Common myeloid progenitor, CD34-positive (primary cell): ENCODE measurements at regions of chr22 and their contacts with region 1.

Region 1: DNA sequence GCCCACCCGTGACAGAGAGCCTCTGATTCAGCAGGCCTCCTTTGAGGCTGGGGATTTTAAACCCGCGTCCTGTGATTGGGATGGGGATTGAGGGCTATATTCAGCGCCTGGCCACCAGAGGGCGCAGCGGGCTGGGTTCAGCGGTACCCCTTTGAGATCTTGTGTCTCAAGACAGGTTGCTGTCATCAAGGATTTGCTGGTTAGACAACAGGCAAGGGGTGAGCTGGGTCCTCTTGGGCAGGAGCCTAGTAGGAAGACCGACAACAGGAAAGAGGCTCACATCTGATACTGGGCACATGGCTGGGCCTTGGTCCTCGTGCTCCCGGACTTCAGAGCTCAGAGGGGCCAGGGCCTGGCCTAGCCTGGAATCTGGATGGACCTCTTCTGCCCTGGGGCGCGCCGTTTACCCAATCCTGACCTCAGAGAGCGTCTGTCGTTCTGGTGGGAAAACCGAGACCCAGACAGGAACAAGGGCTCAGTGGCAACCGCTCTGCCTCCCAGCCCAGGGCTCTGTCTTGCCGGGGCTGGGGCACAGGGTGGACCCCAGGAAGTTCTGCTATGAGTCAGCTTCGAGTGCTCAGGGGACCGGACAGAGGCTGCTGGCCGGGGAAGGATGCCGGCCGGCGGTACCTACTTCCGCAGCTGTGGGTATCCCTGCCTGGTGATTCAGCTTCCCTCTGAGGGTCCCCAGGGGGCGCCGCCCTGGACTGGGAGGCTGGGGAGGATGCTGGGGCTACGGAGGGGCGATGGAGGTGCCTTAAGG is 929 bp upstream of the SLC35E4 start:
- DNase-seq: peak; percentile 84 to 89 (median 89)
- H3K4me3 ChIP-seq: peak overlapping the region in 5 of 7 experiments; percentile 30 to 78 (median 73)
- H3K27ac ChIP-seq: no peak overlapping the region
- H3K4me1 ChIP-seq: peaks cover 0 to 24% (median 23%) of the 10 kb centered on the region in 4 experiments
- H3K27me3 ChIP-seq: no peaks in the 10 kb centered on the region

Region 2: DNA sequence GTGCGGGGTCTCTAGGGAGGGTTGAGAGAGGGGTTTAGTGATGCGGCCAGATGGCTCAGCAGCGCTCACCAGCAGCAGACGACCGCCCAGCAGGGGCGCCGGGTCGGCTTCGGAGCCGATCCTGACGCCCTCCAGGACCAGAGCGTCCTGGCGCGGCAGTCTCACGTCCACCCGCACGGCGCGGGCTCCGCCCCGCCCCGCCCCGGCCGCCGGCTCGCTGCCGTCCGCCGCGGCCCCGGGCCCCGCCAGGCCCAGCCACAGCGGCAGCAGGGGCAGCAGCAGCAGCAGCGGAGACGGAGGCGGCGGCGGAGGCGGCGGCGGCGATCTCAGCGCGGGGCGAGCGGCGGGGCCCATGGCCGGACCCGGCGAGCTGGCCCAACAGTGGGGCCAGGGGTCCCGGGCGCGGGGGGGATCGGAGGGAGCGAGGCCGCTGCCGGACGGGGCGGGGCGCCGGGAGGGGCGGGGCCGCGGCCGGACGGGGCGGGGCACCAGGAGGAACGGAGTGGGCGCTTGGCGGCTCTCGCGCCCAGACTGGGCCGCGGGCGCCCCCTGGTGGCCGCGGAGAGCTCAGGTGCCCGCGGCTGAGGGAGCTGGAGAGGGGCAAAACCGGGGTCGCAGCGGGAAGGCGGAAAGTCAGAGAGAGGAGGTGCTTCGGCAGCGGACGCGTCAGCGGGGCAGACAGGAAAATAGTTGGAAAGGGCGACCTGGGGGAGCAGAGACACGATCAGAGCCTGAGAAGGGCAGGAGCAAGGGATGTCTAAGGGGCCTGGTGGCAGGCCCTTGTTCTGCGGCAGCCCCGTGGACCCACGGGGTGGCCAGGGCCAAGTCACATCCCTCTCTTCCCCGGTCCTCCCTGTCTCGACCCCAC is 247.5 kb before region 1 on chr22 and contains the start of gene RNF215:
- CTCF ChIA-PET with region 1: no interaction called
- POLR2A ChIA-PET with region 1: no interaction called
- DNase-seq: peak; percentile 74 to 79 (median 78)
- H3K4me3 ChIP-seq: peak within 1 kb of the TSS; percentile 25 to 75 (median 57)
- H3K27ac ChIP-seq: peak within 1 kb of the TSS in 1 of 2 experiments; percentile 34
- H3K4me1 ChIP-seq: peaks cover 2 to 12% (median 11%) of the 10 kb centered on the region in 4 experiments
- H3K27me3 ChIP-seq: no peaks in the 10 kb centered on the region

Region 3: GRCh38 chr22:30649430-30650007 is 14.9 kb after region 1 on chr22:
- CTCF ChIA-PET with region 1: interaction called, 12 read pairs
- POLR2A ChIA-PET with region 1: no interaction called
- DNase-seq: peak; percentile 85 to 94 (median 92)
- H3K4me3 ChIP-seq: no peak overlapping the region
- H3K27ac ChIP-seq: no peak overlapping the region
- H3K4me1 ChIP-seq: peaks cover 0 to 8% (median 3%) of the 10 kb centered on the region in 4 experiments
- H3K27me3 ChIP-seq: no peaks in the 10 kb centered on the region

Region 4: GRCh38 chr22:30742291-30743256 is 107.9 kb after region 1 on chr22:
- CTCF ChIA-PET with region 1: interaction called, 22 read pairs
- POLR2A ChIA-PET with region 1: no interaction called
- DNase-seq: no peak
- H3K4me3 ChIP-seq: no peak overlapping the region
- H3K27ac ChIP-seq: no peak overlapping the region
- H3K4me1 ChIP-seq: peaks cover 3 to 17% (median 13%) of the 10 kb centered on the region in 4 experiments
- H3K27me3 ChIP-seq: no peaks in the 10 kb centered on the region